CD4-positive, alpha-beta memory T cell (primary cell): ENCODE measurements at regions of chr9 and their contacts with region 1.

Region 1: GRCh38 chr9:134067904-134068743 is at the start of gene BRD3:
- DNase-seq: peak; percentile 82 to 89 (median 85)
- H3K4me3 ChIP-seq: peak within 1 kb of the TSS; percentile 65 to 74
- H3K4me3 Mint-ChIP-seq: peak within 1 kb of the TSS; percentile 89 to 98 (median 91)
- H3K27ac ChIP-seq: peak within 1 kb of the TSS; percentile 78
- H3K27ac Mint-ChIP-seq: peak within 1 kb of the TSS; percentile 89 to 97 (median 94)
- H3K4me1 ChIP-seq: peaks cover 34% of the 10 kb centered on the region
- H3K4me1 Mint-ChIP-seq: peaks cover 18 to 46% (median 23%) of the 10 kb centered on the region in 4 donors
- H3K27me3 ChIP-seq: peaks cover 4% of the 10 kb centered on the region
- H3K27me3 Mint-ChIP-seq: peaks cover 11 to 14% of the 10 kb centered on the region in 2 donors
- total RNA-seq, gene BRD3: 40.8 to 48.5 TPM

Region 2: DNA sequence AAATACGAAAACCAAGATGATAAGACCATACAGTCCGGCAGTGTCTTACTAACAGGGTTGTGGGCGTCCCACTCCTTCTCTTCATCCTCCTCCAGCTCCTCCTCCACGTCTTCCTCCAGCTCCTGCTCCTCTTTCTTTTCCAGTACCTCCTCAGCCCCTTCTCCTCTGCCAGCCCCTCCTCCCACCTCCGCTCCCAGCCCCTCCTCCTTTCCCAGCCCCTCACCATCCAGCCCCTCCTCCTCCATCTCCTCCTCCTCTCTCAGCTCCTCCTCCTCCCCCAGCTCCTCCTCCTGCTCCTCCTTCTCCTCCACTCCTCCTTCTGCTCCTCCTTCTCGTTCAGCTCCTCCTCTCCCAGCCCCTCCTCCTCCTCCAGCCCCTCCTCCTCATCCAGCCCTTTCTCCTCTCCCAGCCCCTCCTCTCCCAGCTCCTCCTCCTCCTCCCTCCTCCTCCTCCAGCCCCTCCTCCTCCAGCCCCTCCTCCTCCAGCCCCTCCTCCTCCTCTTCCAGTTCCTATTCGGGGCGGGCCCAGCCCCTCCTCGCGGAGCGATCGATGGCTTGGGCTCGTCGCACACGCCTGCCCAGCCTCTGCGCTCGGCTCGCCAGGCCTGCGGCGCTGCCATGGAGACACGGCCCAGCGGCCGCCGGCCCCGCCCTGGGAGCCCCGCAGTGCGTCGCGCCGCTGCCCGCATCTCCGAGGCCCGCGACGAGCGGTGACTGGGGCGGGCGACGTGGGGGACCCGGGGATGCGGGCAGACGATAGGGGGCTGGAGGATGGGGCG is 43.1 kb before region 1 on chr9 and contains the start of gene BRD3OS:
- CTCF ChIA-PET with region 1: interaction called, 3 read pairs
- POLR2A ChIA-PET with region 1: interaction called, 26 read pairs
- intact Hi-C with region 1: loop called (anchors 1 kb)
- DNase-seq: peak; percentile 89 to 96 (median 93)
- H3K4me3 ChIP-seq: peak within 1 kb of the TSS; percentile 36 to 89
- H3K4me3 Mint-ChIP-seq: peak within 1 kb of the TSS; percentile 78 to 86 (median 82)
- H3K27ac ChIP-seq: peak within 1 kb of the TSS; percentile 68
- H3K27ac Mint-ChIP-seq: peak within 1 kb of the TSS; percentile 45 to 90 (median 85)
- H3K4me1 ChIP-seq: peaks cover 14% of the 10 kb centered on the region
- H3K4me1 Mint-ChIP-seq: peaks cover 3 to 22% (median 7%) of the 10 kb centered on the region in 4 donors
- H3K27me3 ChIP-seq: no peaks in the 10 kb centered on the region
- H3K27me3 Mint-ChIP-seq: no peaks in the 10 kb centered on the region
- total RNA-seq, gene BRD3OS: 18.3 to 21.5 TPM

Region 3: GRCh38 chr9:134135343-134136118 is 67.4 kb after region 1 on chr9 and contains the start of gene WDR5:
- CTCF ChIA-PET with region 1: interaction called, 3 read pairs
- POLR2A ChIA-PET with region 1: interaction called, 10 read pairs
- intact Hi-C with region 1: loop called (anchors 1 kb)
- DNase-seq: peak; percentile 87 to 93 (median 90)
- H3K4me3 ChIP-seq: peak within 1 kb of the TSS; percentile 47 to 94
- H3K4me3 Mint-ChIP-seq: peak within 1 kb of the TSS; percentile 89 to 95 (median 90)
- H3K27ac ChIP-seq: peak within 1 kb of the TSS; percentile 84
- H3K27ac Mint-ChIP-seq: peak within 1 kb of the TSS; percentile 81 to 92 (median 89)
- H3K4me1 ChIP-seq: peaks cover 39% of the 10 kb centered on the region
- H3K4me1 Mint-ChIP-seq: peaks cover 25 to 53% (median 37%) of the 10 kb centered on the region in 4 donors
- H3K27me3 ChIP-seq: no peaks in the 10 kb centered on the region
- H3K27me3 Mint-ChIP-seq: no peaks in the 10 kb centered on the region
- total RNA-seq, gene WDR5: 30.3 to 32.7 TPM

Region 4: GRCh38 chr9:134301387-134302129 is 233.4 kb after region 1 on chr9:
- CTCF ChIA-PET with region 1: no interaction called
- POLR2A ChIA-PET with region 1: no interaction called
- intact Hi-C with region 1: no loop called
- DNase-seq: peak in 4 of 5 donors; percentile 45 to 78 (median 51)
- H3K4me3 ChIP-seq: no peak overlapping the region
- H3K4me3 Mint-ChIP-seq: peak overlapping the region in 6 of 8 donors; percentile 4 to 62 (median 38)
- H3K27ac ChIP-seq: no peak overlapping the region
- H3K27ac Mint-ChIP-seq: peak overlapping the region; percentile 3 to 91 (median 68)
- H3K4me1 ChIP-seq: peaks cover 9% of the 10 kb centered on the region
- H3K4me1 Mint-ChIP-seq: peaks cover 8 to 17% (median 12%) of the 10 kb centered on the region in 4 donors
- H3K27me3 ChIP-seq: no peaks in the 10 kb centered on the region
- H3K27me3 Mint-ChIP-seq: no peaks in the 10 kb centered on the region

Region 5: DNA sequence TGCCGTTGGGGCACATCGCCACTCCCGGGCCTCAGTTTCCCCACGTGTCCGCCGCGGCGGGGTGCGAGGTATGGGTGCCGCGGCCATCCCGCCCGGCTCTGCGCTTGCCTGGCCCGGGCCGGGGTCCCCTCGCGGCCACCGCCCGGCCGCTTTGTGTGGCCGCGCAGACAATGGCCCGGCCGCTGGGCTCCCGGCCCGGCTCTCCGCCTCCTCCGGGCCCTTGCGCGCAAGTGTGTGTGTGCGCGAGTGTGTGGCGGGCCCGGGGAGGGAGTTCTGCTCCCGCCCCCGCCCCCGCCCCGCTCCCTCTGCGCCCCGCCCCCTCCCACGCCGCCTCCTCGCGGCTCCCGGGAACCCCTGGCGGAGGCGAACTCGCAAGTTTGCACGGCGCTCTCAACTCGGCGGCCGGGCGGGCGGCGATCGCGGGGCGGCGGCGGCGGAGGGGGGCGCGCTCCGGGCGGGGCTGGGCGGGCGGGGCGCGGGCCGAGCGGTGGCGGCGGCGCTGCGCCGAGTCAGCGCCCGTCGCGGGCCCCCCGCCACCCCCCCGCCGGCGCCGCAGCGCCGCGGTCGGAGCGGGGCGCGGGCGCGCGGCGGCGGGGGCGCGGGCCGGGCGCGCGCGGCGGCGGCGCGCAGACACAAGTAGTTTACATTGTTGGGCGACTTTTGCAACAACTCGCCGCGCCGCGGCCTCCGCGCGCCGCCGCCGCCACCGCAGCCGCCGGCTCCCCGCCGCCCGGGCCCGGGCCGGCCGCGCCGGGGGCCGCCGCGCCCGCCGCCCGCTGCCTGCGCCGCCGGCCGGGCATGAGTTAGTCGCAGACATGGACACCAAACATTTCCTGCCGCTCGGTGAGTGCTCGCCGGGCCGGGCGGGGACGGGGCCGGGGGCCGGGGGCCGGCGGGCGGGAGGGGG is 257.9 kb after region 1 on chr9 and contains the start of gene RXRA:
- CTCF ChIA-PET with region 1: no interaction called
- POLR2A ChIA-PET with region 1: no interaction called
- intact Hi-C with region 1: loop called (anchors 2 kb)
- DNase-seq: peak; percentile 63 to 80 (median 68)
- H3K4me3 ChIP-seq: peak within 1 kb of the TSS; percentile 57 to 80
- H3K4me3 Mint-ChIP-seq: peak within 1 kb of the TSS; percentile 73 to 82 (median 80)
- H3K27ac ChIP-seq: peak within 1 kb of the TSS; percentile 45
- H3K27ac Mint-ChIP-seq: peak within 1 kb of the TSS in 4 of 7 donors; percentile 48 to 97 (median 72)
- H3K4me1 ChIP-seq: peaks cover 22% of the 10 kb centered on the region
- H3K4me1 Mint-ChIP-seq: peaks cover 4 to 32% (median 12%) of the 10 kb centered on the region in 4 donors
- H3K27me3 ChIP-seq: no peaks in the 10 kb centered on the region
- H3K27me3 Mint-ChIP-seq: no peaks in the 10 kb centered on the region
- total RNA-seq, gene RXRA: 11.6 to 11.9 TPM